ENCODE measurements at regions of chr6 and their contacts with region 1.

Region 1: DNA sequence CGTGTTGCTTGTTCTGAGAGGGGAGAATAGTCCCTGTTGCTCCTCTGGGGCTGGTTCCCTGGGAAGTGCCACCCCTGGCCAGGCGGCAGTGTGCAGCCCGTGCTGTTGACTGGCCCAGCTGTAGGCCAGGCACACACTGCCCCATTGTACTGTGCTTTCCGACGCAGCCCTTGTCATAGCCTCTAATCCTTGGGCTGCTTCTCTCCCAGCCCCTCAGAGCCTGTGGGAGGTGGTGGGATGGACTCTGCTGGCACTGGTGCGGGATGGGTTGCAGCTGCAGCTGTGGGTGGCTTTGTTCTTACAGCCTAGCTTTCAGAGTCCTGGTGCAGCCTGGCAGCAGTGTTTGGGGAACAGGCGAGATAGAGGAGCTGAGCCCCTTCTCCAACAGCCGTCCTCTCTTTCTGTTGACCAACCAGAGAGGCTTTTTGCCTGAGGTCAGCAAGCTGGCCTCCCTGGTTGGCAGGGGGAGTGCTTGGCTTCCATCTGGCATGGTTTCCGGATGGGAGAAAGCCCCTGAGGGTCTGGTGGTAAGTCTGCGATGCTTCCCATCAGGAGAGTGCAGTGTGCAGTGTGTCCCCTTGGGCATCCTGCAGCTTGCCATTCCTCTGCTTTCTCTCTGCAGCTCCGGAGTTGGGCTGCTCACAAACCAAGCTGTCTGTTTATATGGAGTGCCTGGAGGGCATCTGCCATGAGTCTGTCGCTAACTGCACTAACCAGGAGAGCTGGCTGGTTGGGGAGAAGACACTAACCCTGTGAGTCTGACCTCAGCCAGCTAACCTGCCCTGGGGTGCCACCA is 12.1 kb downstream of the TJAP1 start:
- DNase-seq: no peak
- ATAC-seq: no peak
- H3K4me3 ChIP-seq: no peak overlapping the region
- H3K27ac ChIP-seq: no peak overlapping the region
- H3K4me1 ChIP-seq: peaks cover 0 to 10% (median 4%) of the 10 kb centered on the region in 4 donors
- H3K27me3 ChIP-seq: no peaks in the 10 kb centered on the region
- CTCF ChIP-seq: no peak
- POLR2A ChIP-seq: no peak

Region 2: DNA sequence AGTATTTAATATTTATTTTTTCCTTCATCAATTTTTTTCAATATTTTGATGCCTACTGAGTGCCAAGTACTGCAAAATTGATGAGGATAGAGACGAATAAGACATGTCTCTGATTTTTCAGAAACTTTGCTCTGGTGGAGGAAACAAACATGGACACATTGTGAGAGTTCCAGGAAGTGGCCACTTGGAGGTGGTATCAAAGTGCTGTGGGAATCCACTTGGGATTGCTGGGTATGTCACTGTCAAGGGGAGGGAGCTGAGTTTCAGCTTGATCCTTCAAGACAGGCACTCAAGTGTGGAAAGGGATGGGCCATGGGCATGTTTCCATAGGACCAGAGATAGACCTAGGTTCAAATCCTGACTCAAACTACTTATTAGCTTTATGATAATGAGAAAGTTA is 86.7 kb before region 1 on chr6:
- intact Hi-C with region 1: loop called in 1 of 2 experiments (anchors 5 kb)
- DNase-seq: no peak
- ATAC-seq: no peak
- H3K4me3 ChIP-seq: no peak overlapping the region
- H3K27ac ChIP-seq: no peak overlapping the region
- H3K4me1 ChIP-seq: no peaks in the 10 kb centered on the region
- H3K27me3 ChIP-seq: no peaks in the 10 kb centered on the region
- CTCF ChIP-seq: no peak
- POLR2A ChIP-seq: no peak

Region 3: GRCh38 chr6:43790025-43790523 is 300.6 kb after region 1 on chr6:
- intact Hi-C with region 1: no loop called
- DNase-seq: peak in 1 of 3 donors; percentile 35
- ATAC-seq: no peak
- H3K4me3 ChIP-seq: no peak overlapping the region
- H3K27ac ChIP-seq: no peak overlapping the region
- H3K4me1 ChIP-seq: no peaks in the 10 kb centered on the region
- H3K27me3 ChIP-seq: no peaks in the 10 kb centered on the region
- CTCF ChIP-seq: no peak
- POLR2A ChIP-seq: no peak